ENCODE measurements at regions of chr11 and their contacts with region 1.

Region 1: DNA sequence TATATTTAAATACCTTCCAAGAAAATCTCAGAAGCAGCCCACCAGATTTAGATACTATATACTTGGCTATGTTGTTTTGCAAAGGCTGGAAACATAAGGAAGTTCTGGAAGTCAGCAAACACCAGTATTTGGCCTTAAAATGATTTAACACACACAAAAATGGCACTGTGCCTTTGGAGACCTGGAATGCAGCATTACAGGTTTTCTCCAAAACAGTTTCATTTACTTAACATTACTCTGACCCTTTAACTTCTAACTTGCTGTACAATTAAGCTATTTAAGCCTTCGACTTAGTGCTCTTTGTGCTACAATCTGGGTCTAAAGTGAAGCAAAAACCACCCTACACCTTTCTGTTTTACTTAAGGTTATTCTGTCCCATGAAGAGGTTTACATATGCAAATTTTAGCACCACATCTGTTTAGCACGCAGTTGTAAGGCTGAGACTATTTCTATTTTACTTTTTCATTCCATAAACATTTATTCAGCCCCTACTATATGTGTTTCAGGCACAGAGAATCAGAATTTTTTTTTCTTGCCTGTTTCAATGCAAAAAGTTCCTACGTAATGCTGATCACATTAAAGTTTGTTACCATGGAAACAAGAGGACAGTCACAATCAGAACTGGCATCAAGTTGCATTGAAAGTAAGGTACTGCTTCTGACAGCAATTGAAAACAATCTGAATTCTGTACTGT is 70.3 kb downstream of the MAML2 start:
- DNase-seq: peak in 1 of 2 experiments; percentile 77
- H3K4me3 ChIP-seq: peak overlapping the region; percentile 4; the same call in 1 of the 2 replicates
- H3K4me3 Mint-ChIP-seq: peak overlapping the region; percentile 70
- H3K27ac Mint-ChIP-seq: peak overlapping the region; percentile 96
- H3K4me1 ChIP-seq: peaks cover 46% of the 10 kb centered on the region
- H3K4me1 Mint-ChIP-seq: peaks cover 37% of the 10 kb centered on the region
- H3K27me3 ChIP-seq: no peaks in the 10 kb centered on the region
- H3K27me3 Mint-ChIP-seq: no peaks in the 10 kb centered on the region
- CTCF ChIP-seq: no peak

Region 2: GRCh38 chr11:96260067-96260511 is 12.6 kb before region 1 on chr11:
- CTCF ChIA-PET with region 1: no interaction called
- POLR2A ChIA-PET with region 1: no interaction called
- intact Hi-C with region 1: loop called (anchors 1 kb)
- DNase-seq: no peak
- H3K4me3 ChIP-seq: no peak overlapping the region
- H3K4me3 Mint-ChIP-seq: no peak overlapping the region
- H3K27ac Mint-ChIP-seq: no peak overlapping the region
- H3K4me1 ChIP-seq: peaks cover 28% of the 10 kb centered on the region
- H3K4me1 Mint-ChIP-seq: peaks cover 60% of the 10 kb centered on the region
- H3K27me3 ChIP-seq: no peaks in the 10 kb centered on the region
- H3K27me3 Mint-ChIP-seq: no peaks in the 10 kb centered on the region
- CTCF ChIP-seq: no peak

Region 3: DNA sequence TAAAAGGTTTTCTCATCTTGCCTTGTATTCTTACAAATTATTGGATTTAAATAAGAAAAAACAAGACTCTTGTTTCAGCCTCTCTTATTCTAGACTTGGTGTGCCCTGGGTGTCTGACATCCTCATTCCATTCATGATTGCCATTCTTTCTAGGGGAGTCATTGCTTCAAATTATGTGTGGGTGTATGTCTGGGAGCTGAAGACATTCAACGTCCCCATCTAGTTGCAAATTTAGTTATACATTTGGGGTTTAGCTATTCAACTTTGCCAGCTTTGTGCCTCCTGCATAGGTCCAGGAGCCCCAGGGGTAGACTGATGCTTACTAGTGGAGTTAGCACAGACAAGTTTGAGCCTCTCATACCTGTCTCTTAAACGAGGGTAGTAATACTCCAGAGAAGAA is 52.3 kb after region 1 on chr11:
- CTCF ChIA-PET with region 1: no interaction called
- POLR2A ChIA-PET with region 1: no interaction called
- intact Hi-C with region 1: loop called (anchors 1 kb)
- DNase-seq: peak in 1 of 2 experiments; percentile 52
- H3K4me3 ChIP-seq: no peak overlapping the region
- H3K4me3 Mint-ChIP-seq: peak overlapping the region; percentile 3
- H3K27ac Mint-ChIP-seq: peak overlapping the region; percentile 97
- H3K4me1 ChIP-seq: peaks cover 82% of the 10 kb centered on the region
- H3K4me1 Mint-ChIP-seq: peaks cover 65% of the 10 kb centered on the region
- H3K27me3 ChIP-seq: no peaks in the 10 kb centered on the region
- H3K27me3 Mint-ChIP-seq: no peaks in the 10 kb centered on the region
- CTCF ChIP-seq: no peak

Region 4: GRCh38 chr11:96337541-96338431 is 65.1 kb after region 1 on chr11:
- CTCF ChIA-PET with region 1: interaction called, 11 read pairs
- POLR2A ChIA-PET with region 1: no interaction called
- intact Hi-C with region 1: loop called (anchors 1 kb)
- DNase-seq: peak in 1 of 2 experiments; percentile 64
- H3K4me3 ChIP-seq: no peak overlapping the region
- H3K4me3 Mint-ChIP-seq: peak overlapping the region; percentile 10
- H3K27ac Mint-ChIP-seq: peak overlapping the region; percentile 10
- H3K4me1 ChIP-seq: peaks cover 46% of the 10 kb centered on the region
- H3K4me1 Mint-ChIP-seq: peaks cover 47% of the 10 kb centered on the region
- H3K27me3 ChIP-seq: no peaks in the 10 kb centered on the region
- H3K27me3 Mint-ChIP-seq: no peaks in the 10 kb centered on the region
- CTCF ChIP-seq: no peak

Measured in Caco-2 (cell line).